ENCODE measurements at regions of chr13 and their contacts with region 1.

Region 1: DNA sequence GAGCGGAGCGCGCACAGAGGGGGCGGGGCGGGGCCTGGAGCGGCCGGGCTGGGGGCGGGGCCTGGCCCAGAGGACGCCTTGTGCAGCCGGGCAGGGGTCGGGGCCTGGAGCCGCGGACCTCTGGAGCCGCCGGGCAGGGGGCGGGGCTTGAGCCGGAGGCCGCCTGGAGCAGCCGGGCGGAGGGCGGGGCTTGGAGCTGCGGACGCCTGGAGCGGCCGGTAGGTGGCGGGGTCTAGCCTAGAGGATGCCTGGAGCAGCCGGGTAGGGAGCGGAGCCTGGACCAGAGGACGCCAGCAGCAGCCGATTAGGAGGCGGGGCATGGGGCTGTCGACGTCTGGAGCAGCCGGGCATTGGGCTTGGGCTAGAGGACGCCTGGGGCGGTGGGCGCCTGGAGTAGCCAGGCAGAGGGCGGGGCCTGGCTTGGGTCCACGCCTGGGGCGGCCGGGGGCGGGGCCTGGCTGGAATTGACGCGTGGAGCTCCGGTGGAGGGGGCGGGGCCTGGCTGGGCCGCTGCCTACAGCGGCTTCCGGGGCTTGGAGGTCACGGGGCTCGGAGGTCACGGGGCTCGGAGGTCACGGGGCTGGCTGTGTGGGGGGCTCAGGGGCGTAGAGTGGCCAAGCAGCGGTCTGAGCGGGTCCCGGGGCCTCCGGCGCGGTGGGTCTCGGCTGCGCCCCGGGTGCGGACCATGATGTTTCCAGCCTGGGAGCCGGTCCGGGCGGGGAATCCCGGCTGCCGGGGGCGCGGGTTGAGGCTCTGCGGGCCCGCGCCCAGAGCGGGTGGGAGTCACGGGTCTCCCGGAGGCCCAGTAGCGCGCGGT is at the start of gene ANKRD10:
- DNase-seq: peak; percentile 99 to 100
- ATAC-seq: peak; percentile 79 to 88 (median 82)
- H3K4me3 ChIP-seq: peak within 1 kb of the TSS; percentile 89
- H3K27ac ChIP-seq: peak within 1 kb of the TSS; percentile 99
- H3K4me1 ChIP-seq: peaks cover 43% of the 10 kb centered on the region
- H3K27me3 ChIP-seq: no peaks in the 10 kb centered on the region
- CTCF ChIP-seq: peak; percentile 86
- total RNA-seq, gene ANKRD10: 106 to 225 (median 159) TPM

Region 2: GRCh38 chr13:110702591-110703526 is 212.4 kb before region 1 on chr13:
- intact Hi-C with region 1: loop called in 1 of 2 experiments (anchors 5 kb)
- DNase-seq: peak; percentile 39 to 82
- ATAC-seq: peak; percentile 54 to 74 (median 58)
- H3K4me3 ChIP-seq: peak overlapping the region; percentile 30
- H3K27ac ChIP-seq: peak overlapping the region; percentile 88
- H3K4me1 ChIP-seq: peaks cover 53% of the 10 kb centered on the region
- H3K27me3 ChIP-seq: no peaks in the 10 kb centered on the region
- CTCF ChIP-seq: no peak

Region 3: DNA sequence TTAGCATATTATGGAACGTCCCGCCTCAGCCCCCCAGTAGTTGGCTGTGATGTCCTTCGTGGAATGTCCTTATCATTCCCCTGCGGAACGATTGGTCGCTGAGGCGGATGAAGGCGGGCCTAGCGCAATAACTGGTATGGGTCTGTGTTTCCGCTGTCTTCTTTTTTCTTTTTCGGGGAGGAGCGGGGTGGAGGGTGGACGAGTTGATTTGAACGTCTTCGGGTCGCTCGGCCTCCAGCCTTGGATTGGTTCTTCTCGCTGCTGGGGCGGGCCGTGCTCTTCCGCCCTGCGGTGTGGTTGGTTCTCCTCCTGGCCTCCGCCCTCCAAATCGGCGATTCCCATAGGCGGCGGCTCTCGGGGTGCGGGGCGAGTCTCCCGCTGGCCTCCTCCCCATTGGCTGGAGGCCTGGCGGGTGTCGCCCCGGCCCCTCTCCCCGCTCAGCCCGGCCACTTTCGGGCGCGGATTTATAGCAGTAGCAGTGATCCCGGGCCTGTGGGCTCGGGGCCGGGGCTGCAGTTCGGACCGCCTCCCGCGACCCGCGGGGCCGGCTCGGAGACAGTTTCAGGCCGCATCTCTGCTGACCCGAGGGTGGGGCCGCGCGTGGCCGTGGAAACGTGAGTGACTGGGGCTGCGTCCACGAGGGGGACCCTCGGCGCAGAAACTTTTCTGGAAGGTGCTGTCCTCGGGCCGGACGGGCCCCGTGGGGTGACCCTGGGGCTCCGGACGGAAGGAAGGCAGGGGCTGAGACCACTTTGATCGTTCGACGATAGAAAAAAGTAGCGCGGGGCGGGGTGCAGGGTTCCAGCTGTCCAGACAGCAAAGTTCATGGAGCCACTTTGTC is 199.7 kb before region 1 on chr13:
- intact Hi-C with region 1: loop called in 1 of 2 experiments (anchors 5 kb)
- DNase-seq: peak; percentile 97 to 99
- ATAC-seq: peak; percentile 72 to 78 (median 74)
- H3K4me3 ChIP-seq: peak overlapping the region; percentile 90
- H3K27ac ChIP-seq: peak overlapping the region; percentile 99
- H3K4me1 ChIP-seq: peaks cover 28% of the 10 kb centered on the region
- H3K27me3 ChIP-seq: no peaks in the 10 kb centered on the region
- CTCF ChIP-seq: peak; percentile 21

Region 4: GRCh38 chr13:110869805-110870706 is 45.2 kb before region 1 on chr13:
- intact Hi-C with region 1: loop called (anchors 1 to 2 kb)
- DNase-seq: peak; percentile 93 to 95
- ATAC-seq: peak; percentile 85 to 92 (median 88)
- H3K4me3 ChIP-seq: peak overlapping the region; percentile 89
- H3K27ac ChIP-seq: peak overlapping the region; percentile 100
- H3K4me1 ChIP-seq: peaks cover 32% of the 10 kb centered on the region
- H3K27me3 ChIP-seq: no peaks in the 10 kb centered on the region
- CTCF ChIP-seq: peak; percentile 16

Region 5: DNA sequence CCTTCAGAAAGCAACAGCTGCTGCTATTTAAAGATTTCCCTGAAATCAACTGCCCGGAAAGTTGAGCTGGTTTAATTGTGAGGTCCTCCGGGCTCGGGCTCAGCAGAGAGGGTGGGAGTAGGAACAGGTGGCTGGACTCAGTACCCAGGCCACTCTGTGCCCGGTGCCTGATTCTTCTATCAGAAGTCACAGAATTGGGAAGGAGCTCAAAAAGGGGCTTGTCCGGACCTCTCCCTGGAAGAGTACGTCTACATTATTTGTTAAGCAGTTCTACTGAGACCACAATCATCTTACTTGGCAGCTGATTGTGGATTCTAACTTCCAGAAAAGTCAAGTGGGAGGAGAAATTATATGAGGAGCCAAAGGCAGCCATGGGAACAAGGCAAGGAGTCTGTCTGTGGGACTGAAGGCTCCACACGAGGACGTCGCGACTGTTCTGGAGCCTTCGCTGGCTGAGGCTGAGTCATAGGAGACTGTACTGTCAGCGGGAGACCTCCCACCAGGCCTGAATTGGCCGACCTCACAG is 91.3 kb after region 1 on chr13:
- intact Hi-C with region 1: loop called in 1 of 2 experiments (anchors 2 kb)
- DNase-seq: peak; percentile 81 to 83
- ATAC-seq: peak; percentile 88 to 91 (median 91)
- H3K4me3 ChIP-seq: peak overlapping the region; percentile 33
- H3K27ac ChIP-seq: peak overlapping the region; percentile 92
- H3K4me1 ChIP-seq: peaks cover 25% of the 10 kb centered on the region
- H3K27me3 ChIP-seq: no peaks in the 10 kb centered on the region
- CTCF ChIP-seq: no peak

Region 6: DNA sequence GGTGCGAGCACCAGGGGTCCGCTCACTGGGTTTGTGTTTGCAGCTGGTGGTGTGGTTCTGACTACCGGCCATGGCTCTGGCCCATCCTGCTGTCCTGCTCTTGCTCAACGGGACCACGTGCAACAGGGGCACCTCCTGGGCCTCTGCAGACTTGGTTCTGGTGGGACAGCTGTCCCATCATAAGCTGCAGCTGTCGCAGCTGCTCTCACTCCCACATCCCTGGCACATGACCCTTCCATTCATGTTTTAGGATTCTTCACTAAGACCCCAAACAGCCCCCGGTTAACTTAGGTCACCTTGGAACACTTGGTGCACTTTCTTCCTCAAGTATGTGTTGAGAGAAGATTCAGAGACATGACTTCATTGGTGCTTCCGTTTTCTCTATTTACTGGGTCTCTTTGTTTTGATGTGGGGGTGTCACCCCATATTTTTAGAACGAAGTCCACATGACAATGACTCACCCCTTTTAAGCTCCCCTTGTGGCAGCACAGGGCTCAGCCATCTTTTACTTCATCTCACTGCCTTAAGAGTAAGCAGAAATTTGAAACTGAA is 131.4 kb after region 1 on chr13:
- intact Hi-C with region 1: loop called in 1 of 2 experiments (anchors 5 kb)
- DNase-seq: peak; percentile 64 to 73
- ATAC-seq: peak; percentile 86 to 92 (median 88)
- H3K4me3 ChIP-seq: no peak overlapping the region
- H3K27ac ChIP-seq: peak overlapping the region; percentile 70
- H3K4me1 ChIP-seq: peaks cover 11% of the 10 kb centered on the region
- H3K27me3 ChIP-seq: no peaks in the 10 kb centered on the region
- CTCF ChIP-seq: peak; percentile 40

Region 7: GRCh38 chr13:111216166-111216960 is 301.1 kb after region 1 on chr13:
- intact Hi-C with region 1: loop called in 1 of 2 experiments (anchors 10 kb)
- DNase-seq: peak; percentile 43 to 72
- ATAC-seq: peak; percentile 67 to 79 (median 73)
- H3K4me3 ChIP-seq: no peak overlapping the region
- H3K27ac ChIP-seq: peak overlapping the region; percentile 88
- H3K4me1 ChIP-seq: peaks cover 91% of the 10 kb centered on the region
- H3K27me3 ChIP-seq: no peaks in the 10 kb centered on the region
- CTCF ChIP-seq: peak; percentile 55

Measured in psoas muscle (tissue), 8 donors.